ENCODE measurements at regions of chr14 and their contacts with region 1.

Region 1: GRCh38 chr14:61616524-61617185 is 78.7 kb upstream of the HIF1A start:
- DNase-seq: peak in 1 of 2 experiments; percentile 83
- H3K4me3 ChIP-seq: no peak overlapping the region
- H3K27ac ChIP-seq: peak overlapping the region; percentile 74
- H3K4me1 ChIP-seq: peaks cover 37% of the 10 kb centered on the region
- H3K27me3 ChIP-seq: no peaks in the 10 kb centered on the region
- CTCF ChIP-seq: no peak

Region 2: GRCh38 chr14:61452452-61452851 is 164.2 kb before region 1 on chr14:
- CTCF ChIA-PET with region 1: no interaction called
- POLR2A ChIA-PET with region 1: no interaction called
- intact Hi-C with region 1: no loop called
- DNase-seq: no peak
- H3K4me3 ChIP-seq: no peak overlapping the region
- H3K27ac ChIP-seq: no peak overlapping the region
- H3K4me1 ChIP-seq: no peaks in the 10 kb centered on the region
- H3K27me3 ChIP-seq: no peaks in the 10 kb centered on the region
- CTCF ChIP-seq: no peak

Region 3: DNA sequence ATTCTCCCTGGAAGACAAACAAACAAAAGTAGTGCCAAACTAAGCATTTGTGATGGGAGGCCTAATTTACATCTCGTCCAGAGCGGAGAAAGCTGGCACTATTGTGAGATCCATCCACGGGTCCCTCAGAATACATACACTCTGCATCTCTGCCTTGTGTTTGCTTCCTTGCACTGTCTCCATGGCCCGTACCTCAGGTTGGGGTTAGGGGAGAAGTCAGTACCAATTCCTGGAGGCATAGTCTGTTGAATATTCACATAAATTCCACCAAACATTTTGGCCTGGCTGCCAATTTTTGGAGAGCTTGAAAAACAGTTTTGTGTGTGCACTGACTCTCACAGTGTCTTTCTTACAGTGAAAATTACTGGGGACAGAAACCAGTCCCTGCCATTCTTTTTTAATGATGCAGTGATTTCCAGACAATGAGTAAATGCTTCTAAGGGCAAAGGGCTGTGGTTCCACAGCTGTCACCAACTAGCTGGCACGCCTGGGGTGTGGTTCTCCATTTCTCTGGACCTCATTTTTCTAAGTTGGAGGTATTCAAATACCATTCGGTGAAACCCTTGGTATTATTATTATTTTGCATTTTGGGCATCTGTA is 41.0 kb before region 1 on chr14:
- CTCF ChIA-PET with region 1: no interaction called
- POLR2A ChIA-PET with region 1: no interaction called
- intact Hi-C with region 1: loop called (anchors 1 kb)
- DNase-seq: peak; percentile 56 to 60
- H3K4me3 ChIP-seq: no peak overlapping the region
- H3K27ac ChIP-seq: peak overlapping the region; percentile 17
- H3K4me1 ChIP-seq: peaks cover 75% of the 10 kb centered on the region
- H3K27me3 ChIP-seq: no peaks in the 10 kb centered on the region
- CTCF ChIP-seq: no peak